Activated CD4-positive, alpha-beta T cell treated with anti-CD3 and anti-CD28 coated beads, Interleukin-2, amount 10 ng/mL, durations not matched to agents 24 days and 14 days (primary cell): ENCODE measurements at regions of chr5 and their contacts with region 1.

Region 1: GRCh38 chr5:148740966-148741742 is 85.3 kb upstream of the ADRB2 start:
- DNase-seq: peak; percentile 61
- H3K4me3 Mint-ChIP-seq: no peak overlapping the region
- H3K27ac Mint-ChIP-seq: no peak overlapping the region
- H3K4me1 Mint-ChIP-seq: no peaks in the 10 kb centered on the region
- H3K27me3 Mint-ChIP-seq: peaks cover 25% of the 10 kb centered on the region

Region 2: DNA sequence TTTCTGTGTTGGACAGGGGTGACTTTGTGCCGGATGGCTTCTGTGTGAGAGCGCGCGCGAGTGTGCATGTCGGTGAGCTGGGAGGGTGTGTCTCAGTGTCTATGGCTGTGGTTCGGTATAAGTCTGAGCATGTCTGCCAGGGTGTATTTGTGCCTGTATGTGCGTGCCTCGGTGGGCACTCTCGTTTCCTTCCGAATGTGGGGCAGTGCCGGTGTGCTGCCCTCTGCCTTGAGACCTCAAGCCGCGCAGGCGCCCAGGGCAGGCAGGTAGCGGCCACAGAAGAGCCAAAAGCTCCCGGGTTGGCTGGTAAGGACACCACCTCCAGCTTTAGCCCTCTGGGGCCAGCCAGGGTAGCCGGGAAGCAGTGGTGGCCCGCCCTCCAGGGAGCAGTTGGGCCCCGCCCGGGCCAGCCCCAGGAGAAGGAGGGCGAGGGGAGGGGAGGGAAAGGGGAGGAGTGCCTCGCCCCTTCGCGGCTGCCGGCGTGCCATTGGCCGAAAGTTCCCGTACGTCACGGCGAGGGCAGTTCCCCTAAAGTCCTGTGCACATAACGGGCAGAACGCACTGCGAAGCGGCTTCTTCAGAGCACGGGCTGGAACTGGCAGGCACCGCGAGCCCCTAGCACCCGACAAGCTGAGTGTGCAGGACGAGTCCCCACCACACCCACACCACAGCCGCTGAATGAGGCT is 85.0 kb after region 1 on chr5 and contains the start of gene ADRB2:
- intact Hi-C with region 1: loop called (anchors 10 kb)
- DNase-seq: peak; percentile 96
- H3K4me3 Mint-ChIP-seq: peak within 1 kb of the TSS; percentile 90
- H3K27ac Mint-ChIP-seq: peak within 1 kb of the TSS; percentile 65
- H3K4me1 Mint-ChIP-seq: peaks cover 11% of the 10 kb centered on the region
- H3K27me3 Mint-ChIP-seq: peaks cover 73% of the 10 kb centered on the region
- total RNA-seq, gene ADRB2: 0.37 and 0.50 TPM in 2 replicates

Region 3: DNA sequence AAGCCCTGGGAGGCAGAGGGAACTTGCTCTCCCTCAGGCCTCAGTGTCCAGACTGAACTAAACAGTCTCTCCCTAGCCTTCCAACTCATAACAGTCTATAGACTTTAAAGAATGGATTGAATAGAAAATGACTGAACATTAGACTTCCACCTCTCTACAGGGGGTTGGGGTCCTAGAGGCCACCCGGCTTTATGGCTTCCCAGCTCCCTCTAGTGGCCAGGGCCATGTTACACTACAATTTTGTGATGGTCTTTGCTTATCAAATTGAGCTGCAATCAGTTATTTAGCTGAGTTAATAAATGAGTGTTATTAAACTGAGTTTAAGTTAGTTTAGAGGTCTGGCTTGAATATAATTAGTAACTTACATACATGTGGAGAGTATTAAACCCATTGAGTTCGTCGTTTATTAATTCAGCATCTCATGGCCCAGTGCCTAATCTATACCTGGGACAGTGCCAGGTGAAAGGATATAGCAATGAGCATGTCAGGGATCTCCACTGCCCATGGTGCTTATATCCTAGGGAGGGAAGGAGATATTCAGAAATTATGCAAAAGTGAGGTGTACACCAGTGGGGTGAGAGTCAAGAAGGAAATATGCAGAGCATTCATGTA is 216.5 kb after region 1 on chr5:
- intact Hi-C with region 1: loop called (anchors 1 kb)
- DNase-seq: peak; percentile 76
- H3K4me3 Mint-ChIP-seq: no peak overlapping the region
- H3K27ac Mint-ChIP-seq: no peak overlapping the region
- H3K4me1 Mint-ChIP-seq: no peaks in the 10 kb centered on the region
- H3K27me3 Mint-ChIP-seq: peaks cover 11% of the 10 kb centered on the region

Region 4: DNA sequence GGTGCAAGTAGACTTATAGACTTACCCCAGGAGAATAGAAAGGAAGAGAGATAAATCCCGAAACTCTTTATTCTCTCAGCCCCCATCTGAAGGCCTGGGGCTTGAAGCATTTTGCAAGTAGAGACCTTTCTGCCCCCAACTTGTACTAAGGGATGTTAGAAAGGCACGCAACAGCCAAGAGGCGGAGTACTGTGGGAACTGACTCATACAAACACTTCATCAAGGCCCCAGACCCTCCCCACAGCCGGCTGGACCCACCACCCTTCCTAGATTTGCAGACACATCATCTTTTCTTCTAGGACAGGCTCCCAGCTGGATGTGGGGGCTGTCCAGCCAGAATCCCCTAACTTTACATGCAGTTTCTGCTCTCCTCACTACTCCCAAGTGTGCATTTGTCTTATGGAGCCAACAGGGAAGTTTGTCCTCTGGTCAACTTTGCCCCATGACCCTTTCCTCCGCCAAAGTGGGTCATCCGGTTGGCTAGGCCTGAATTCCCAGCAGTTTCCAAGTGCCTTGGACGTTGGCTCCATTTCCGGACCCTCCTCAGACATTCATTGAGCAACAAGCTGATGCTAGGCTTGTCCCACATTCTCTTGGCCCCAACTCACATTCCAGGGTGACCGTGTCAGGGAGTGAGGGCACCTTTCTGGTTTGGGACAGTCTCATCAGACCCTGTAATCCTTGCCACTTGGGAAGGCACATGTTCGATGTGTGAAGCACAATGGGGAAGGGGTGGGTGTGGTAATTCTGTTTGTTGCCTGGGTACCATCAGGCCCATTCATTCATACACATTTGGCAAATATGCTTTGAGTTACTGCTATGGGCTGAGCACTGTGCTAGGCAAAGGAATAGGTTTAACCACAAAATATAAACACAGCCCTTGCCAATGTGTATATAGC is 464.7 kb after region 1 on chr5:
- intact Hi-C with region 1: no loop called
- DNase-seq: no peak
- H3K4me3 Mint-ChIP-seq: no peak overlapping the region
- H3K27ac Mint-ChIP-seq: no peak overlapping the region
- H3K4me1 Mint-ChIP-seq: no peaks in the 10 kb centered on the region
- H3K27me3 Mint-ChIP-seq: no peaks in the 10 kb centered on the region